WTC11 (cell line): ENCODE measurements at regions of chr10 and their contacts with region 1.

Region 1: DNA sequence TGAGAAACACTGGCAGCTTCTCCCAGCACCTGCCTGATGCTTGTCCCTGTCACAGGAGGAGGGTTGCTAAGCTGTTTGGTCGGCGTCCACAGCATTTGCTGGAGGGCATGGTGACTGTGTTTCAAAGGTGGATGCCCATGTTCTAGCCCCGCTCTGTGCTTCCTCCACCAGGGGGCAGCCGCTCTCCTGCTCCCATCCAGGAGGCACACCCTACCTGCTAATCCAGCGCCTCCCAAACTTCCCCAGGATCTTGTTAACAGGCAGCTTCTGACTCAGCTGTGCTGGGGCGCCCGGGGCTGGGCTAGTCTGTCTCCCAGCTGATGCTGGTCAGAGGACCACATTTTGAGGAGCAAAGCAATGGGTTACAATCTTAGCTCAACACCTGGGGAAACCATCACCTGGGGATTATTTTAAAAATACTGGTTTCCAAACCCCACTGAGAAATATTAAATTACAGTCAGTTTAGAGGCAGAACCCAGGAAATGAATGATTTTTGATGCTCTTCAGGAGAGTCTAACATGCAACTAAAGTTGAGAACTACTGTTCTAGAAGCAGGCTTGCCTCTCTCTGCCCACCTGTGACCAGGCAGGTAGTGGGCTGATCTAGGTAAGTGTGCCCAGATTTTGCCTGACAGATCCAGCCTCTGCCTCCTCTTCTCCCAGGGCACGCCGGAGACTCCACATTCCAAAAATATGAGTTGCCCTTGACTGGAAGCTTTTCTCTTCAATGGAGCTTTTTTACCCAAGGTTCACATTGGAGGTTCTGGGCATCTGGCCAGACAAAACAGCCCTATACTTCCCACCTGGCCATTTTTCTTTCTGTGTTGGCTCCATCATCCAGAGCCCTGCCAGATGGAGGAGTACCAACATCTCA is 92.7 kb upstream of the GPR26 start:
- DNase-seq: peak; percentile 92
- ATAC-seq: peak; percentile 98
- H3K4me3 Mint-ChIP-seq: no peak overlapping the region
- H3K27ac Mint-ChIP-seq: no peak overlapping the region
- H3K4me1 Mint-ChIP-seq: peaks cover 20% of the 10 kb centered on the region
- H3K27me3 Mint-ChIP-seq: peaks cover 2% of the 10 kb centered on the region
- CTCF ChIP-seq: peak; percentile 63

Region 2: DNA sequence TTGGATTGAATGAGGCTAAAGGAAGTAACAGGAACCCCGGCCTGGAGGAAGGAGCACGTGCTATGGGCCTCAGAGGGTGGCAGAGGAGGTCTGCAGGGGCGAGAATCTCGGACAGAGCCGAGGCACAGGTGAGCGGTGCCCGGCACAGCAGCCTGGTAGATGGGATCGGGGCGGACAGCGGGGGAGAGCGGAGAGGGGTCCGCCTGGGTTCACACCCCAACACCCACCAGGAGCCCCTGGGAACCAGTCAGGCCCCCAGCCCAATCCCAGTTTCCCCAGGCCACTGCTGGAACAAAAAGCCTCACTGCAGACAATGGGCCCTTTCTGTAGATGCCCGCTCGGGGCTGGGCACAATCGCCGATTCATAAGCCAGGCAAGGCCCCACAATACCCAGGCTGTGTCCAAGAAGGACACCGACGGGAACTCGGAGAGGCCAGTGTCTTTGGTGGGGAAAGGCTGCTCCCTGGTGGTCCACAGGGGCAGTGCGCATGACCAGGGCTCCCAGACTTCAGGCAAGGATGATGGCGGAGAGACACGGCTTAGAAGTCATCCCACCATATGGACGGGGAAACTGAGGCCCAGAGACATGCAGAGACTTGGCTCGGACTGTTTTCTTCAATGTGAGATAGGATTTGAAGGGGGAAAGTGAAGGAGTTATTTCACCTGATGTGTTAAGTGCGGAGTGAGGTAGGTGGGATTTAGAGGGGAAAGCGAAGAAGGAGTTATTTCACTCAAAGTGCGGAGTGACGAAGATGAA is 14.2 kb before region 1 on chr10:
- CTCF ChIA-PET with region 1: interaction called, 10 read pairs
- POLR2A ChIA-PET with region 1: no interaction called
- DNase-seq: peak; percentile 86
- ATAC-seq: peak; percentile 84
- H3K4me3 Mint-ChIP-seq: no peak overlapping the region
- H3K27ac Mint-ChIP-seq: no peak overlapping the region
- H3K4me1 Mint-ChIP-seq: peaks cover 11% of the 10 kb centered on the region
- H3K27me3 Mint-ChIP-seq: peaks cover 3% of the 10 kb centered on the region; the same call in 1 of the 2 replicates
- CTCF ChIP-seq: peak; percentile 99

Region 3: GRCh38 chr10:123681285-123681684 is 107.8 kb after region 1 on chr10:
- CTCF ChIA-PET with region 1: interaction called, 12 read pairs
- POLR2A ChIA-PET with region 1: no interaction called
- DNase-seq: no peak
- ATAC-seq: no peak
- H3K4me3 Mint-ChIP-seq: no peak overlapping the region
- H3K27ac Mint-ChIP-seq: no peak overlapping the region
- H3K4me1 Mint-ChIP-seq: no peaks in the 10 kb centered on the region
- H3K27me3 Mint-ChIP-seq: no peaks in the 10 kb centered on the region; the same call in 1 of the 2 replicates
- CTCF ChIP-seq: no peak

Region 4: GRCh38 chr10:123885406-123886170 is 312.1 kb after region 1 on chr10:
- CTCF ChIA-PET with region 1: no interaction called
- POLR2A ChIA-PET with region 1: no interaction called
- DNase-seq: no peak
- ATAC-seq: no peak
- H3K4me3 Mint-ChIP-seq: no peak overlapping the region
- H3K27ac Mint-ChIP-seq: no peak overlapping the region
- H3K4me1 Mint-ChIP-seq: peaks cover 9% of the 10 kb centered on the region
- H3K27me3 Mint-ChIP-seq: peaks cover 11% of the 10 kb centered on the region
- CTCF ChIP-seq: no peak